ENCODE measurements at regions of chr12 and their contacts with region 1.

Region 1: DNA sequence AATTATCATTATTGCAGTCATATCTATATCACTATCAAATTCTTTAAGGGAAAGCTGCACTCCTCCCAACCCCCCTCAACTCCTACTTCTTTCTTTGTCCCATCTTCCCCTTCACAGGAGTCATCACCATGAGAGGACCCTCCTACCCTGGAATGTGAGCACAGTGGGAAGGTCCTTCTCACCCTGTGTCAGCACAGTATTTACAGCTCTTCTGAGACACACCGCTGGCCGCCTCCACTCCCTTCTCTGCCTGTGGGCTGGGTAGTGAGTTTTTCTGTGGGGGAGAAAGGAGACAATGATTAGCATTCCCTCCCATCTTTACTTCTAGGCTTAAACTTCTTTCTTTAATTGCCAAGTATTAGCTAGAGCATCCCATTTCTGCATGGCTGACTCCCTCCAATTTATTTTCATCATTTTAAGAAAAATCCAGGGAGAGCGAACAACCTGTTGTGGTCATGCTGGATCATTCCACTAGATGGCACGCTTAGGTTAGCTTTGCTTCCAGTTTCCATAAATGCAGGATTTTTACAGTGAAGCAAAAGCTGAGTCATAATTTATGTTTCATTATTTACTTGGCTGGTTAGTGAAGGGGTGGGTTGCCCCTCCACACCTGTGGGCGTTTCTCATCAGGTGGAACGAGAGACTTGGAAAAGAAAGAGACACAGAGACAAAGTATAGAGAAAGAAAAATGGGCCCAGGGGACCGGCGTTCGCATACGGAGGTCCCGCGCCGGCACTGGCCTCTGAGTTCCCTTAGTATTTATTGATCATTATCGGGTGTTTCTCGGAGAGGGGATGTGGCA is 188.5 kb downstream of the ALX1 start:
- DNase-seq: peak; percentile 61
- ATAC-seq: peak; percentile 80
- H3K4me3 Mint-ChIP-seq: peak overlapping the region; percentile 56
- H3K27ac Mint-ChIP-seq: peak overlapping the region; percentile 49
- H3K4me1 Mint-ChIP-seq: peaks cover 14% of the 10 kb centered on the region
- H3K27me3 Mint-ChIP-seq: peaks cover 6% of the 10 kb centered on the region

Region 2: GRCh38 chr12:85484387-85484786 is 15.8 kb after region 1 on chr12:
- CTCF ChIA-PET with region 1: no interaction called
- POLR2A ChIA-PET with region 1: no interaction called
- intact Hi-C with region 1: no loop called
- DNase-seq: no peak
- ATAC-seq: no peak
- H3K4me3 Mint-ChIP-seq: no peak overlapping the region
- H3K27ac Mint-ChIP-seq: no peak overlapping the region
- H3K4me1 Mint-ChIP-seq: no peaks in the 10 kb centered on the region
- H3K27me3 Mint-ChIP-seq: no peaks in the 10 kb centered on the region

Region 3: GRCh38 chr12:85575120-85576096 is 106.9 kb after region 1 on chr12:
- CTCF ChIA-PET with region 1: no interaction called
- POLR2A ChIA-PET with region 1: no interaction called
- intact Hi-C with region 1: loop called in 1 of 2 experiments (anchors 1 kb)
- DNase-seq: peak; percentile 53
- ATAC-seq: peak; percentile 68
- H3K4me3 Mint-ChIP-seq: no peak overlapping the region
- H3K27ac Mint-ChIP-seq: no peak overlapping the region
- H3K4me1 Mint-ChIP-seq: no peaks in the 10 kb centered on the region
- H3K27me3 Mint-ChIP-seq: no peaks in the 10 kb centered on the region